ENCODE measurements at regions of chr10 and their contacts with region 1.

Region 1: GRCh38 chr10:102167861-102168260 is 15.7 kb downstream of the NOLC1 start:
- DNase-seq: no peak
- ATAC-seq: no peak
- H3K4me3 ChIP-seq: no peak overlapping the region
- H3K27ac ChIP-seq: no peak overlapping the region
- H3K4me1 ChIP-seq: peaks cover 0 to 12% (median 2%) of the 10 kb centered on the region in 12 donors
- H3K27me3 ChIP-seq: no peaks in the 10 kb centered on the region
- CTCF ChIP-seq: no peak
- POLR2A ChIP-seq: no peak

Region 2: DNA sequence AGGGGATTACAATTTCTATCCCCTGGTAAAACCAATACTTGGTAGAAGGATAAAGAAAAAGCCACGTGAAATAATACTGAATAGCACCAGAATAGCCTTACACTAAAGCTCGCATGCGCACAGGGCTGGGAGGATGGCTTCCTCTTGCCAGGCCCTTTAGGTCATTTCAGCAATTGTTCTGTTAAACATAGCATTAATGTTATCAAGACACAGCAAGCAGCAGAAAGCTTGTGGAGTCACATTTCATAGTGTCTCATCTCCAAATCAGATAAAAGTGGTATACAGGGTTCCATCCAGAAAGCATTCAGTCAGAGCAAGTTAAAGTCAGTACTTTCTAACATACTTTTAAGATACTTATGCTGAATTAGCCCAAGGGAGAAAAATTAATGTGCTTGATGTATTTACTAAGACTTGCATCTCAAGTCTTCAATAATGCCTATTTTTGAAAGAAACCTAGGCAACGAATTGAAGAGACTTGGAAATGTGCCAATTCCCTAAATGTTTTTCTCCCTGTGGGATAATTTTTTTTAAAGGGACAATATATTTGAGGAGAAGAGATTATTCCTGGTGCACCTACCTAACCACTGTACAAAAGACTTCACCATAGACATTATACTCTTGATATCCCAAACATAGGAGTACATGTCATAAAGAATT is 370.3 kb before region 1 on chr10:
- intact Hi-C with region 1: no loop called
- DNase-seq: no peak
- ATAC-seq: peak in 1 of 4 donors; percentile 10
- H3K4me3 ChIP-seq: no peak overlapping the region
- H3K27ac ChIP-seq: no peak overlapping the region
- H3K4me1 ChIP-seq: peaks cover 0 to 16% (median 3%) of the 10 kb centered on the region in 12 donors
- H3K27me3 ChIP-seq: no peaks in the 10 kb centered on the region
- CTCF ChIP-seq: no peak
- POLR2A ChIP-seq: no peak

Region 3: DNA sequence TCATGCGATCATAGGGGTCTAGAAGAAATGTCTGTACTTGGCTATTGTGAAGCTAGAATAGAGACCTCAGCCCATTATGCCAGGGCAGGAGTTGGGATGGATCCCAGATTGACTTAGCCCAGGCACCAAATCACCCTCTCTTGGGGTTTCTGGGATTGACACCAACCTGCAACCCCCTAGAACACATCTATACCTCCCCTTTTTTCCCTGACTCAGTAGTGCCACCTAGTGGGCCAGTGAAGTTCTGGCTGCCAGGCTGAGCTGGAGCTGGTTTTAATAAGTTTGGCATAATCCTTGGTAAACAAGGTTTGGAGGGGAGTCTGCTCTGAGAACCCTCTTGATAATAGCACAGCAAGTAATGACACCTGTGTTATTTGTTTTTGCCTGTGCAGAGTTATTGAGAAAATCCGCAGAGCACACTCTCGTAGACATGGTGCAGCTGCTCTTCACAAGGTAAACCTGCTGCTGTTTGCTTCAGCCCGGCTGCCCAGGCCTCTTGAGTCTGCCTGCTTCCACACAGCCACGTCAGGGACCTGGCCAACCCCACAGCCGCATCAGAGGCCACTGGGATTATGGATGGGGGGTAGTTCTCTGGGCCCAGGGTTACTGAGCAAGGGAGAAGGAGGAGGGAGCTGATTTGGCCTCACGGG is 184.3 kb after region 1 on chr10:
- intact Hi-C with region 1: loop called (anchors 2 to 5 kb)
- DNase-seq: peak in 4 of 5 donors; percentile 35 to 50 (median 46)
- ATAC-seq: peak in 3 of 4 donors; percentile 54 to 72 (median 68)
- H3K4me3 ChIP-seq: no peak overlapping the region
- H3K27ac ChIP-seq: no peak overlapping the region
- H3K4me1 ChIP-seq: peaks cover 0 to 7% (median 0%) of the 10 kb centered on the region in 12 donors
- H3K27me3 ChIP-seq: no peaks in the 10 kb centered on the region
- CTCF ChIP-seq: peak; percentile 80 to 95 (median 90)
- POLR2A ChIP-seq: no peak

Region 4: GRCh38 chr10:102399217-102400089 is 231.6 kb after region 1 on chr10:
- intact Hi-C with region 1: loop called in 3 of 10 experiments (anchors 2 to 5 kb)
- DNase-seq: peak; percentile 87 to 95 (median 92)
- ATAC-seq: peak; percentile 60 to 80 (median 73)
- H3K4me3 ChIP-seq: peak overlapping the region; percentile 18 to 85 (median 70)
- H3K27ac ChIP-seq: peak overlapping the region; percentile 70 to 99 (median 86)
- H3K4me1 ChIP-seq: peaks cover 0 to 44% (median 26%) of the 10 kb centered on the region in 12 donors
- H3K27me3 ChIP-seq: no peaks in the 10 kb centered on the region
- CTCF ChIP-seq: peak; percentile 92 to 99 (median 95)
- POLR2A ChIP-seq: peak in 1 of 2 donors; percentile 46

Measured in heart left ventricle (tissue), 16 donors.